H1 (cell line): ENCODE measurements at regions of chr19 and their contacts with region 1.

Region 1: DNA sequence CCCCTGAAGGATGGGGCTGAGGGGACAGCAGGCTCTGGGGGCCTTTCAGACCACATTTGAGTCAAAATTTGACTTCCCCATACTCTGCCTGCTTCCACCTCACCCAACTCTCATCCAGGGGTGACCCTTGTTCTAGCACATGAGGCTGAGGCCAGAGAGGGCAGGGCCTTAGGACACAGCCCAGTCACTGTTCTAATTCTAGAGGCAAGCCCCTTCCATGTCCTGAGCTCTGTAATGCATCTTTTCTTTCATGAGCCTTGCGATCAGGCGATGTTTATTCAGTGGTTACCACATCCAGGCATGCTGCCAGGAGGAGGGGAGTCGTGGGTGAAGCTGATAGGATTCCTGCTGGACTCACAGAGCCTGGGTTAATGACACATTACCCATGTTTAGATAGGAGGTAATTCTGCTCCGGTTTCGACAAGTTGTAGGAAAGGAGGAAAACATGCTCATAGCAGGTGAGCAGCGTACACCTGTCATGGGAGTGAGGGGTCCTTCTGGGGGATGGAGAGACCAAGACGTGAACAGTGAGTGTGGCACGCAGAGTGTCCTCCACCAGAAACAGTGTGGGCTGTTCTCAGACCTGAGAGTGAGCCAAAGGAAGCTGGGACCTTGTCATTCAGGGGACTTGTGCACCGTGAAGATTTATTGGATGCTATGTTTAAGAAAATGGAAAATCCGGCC is 9.3 kb downstream of the RPS9 start:
- DNase-seq: no peak
- H3K4me3 ChIP-seq: no peak overlapping the region
- H3K27ac ChIP-seq: no peak overlapping the region
- H3K4me1 ChIP-seq: peaks cover 0 to 4% (median 4%) of the 10 kb centered on the region in 4 experiments; a peak in 5 of 7 replicates
- H3K27me3 ChIP-seq: no peaks in the 10 kb centered on the region
- CTCF ChIP-seq: no peak
- EP300 ChIP-seq: no peak
- POLR2A ChIP-seq: no peak
- RAD21 ChIP-seq: no peak

Region 2: DNA sequence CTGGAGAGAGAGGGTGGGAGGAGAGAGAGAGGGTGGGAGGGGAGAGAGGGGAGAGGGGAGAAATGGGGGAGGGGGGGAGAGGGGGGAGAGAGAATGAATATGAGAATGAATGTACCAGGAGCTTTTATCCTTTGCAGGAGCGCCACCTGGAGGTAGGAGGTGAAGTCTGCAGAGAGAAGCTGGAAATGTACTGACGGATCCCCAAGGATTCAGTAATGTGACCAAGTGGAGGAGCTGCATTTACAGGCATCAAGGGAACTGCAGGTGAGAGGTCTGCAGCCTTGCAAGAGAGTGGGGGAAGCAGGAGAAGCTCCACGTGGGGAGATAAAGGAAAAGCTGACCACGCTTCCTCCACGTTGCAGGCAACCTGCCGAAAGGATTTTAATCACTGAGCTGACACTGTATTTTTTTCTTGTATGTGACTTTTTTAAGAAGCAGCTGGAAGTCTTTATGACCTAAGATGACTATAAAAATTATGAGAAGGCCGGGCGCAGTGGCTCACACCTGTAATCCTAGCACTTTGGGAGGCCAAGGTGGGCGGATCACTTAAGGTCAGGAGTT is 179.9 kb before region 1 on chr19:
- CTCF ChIA-PET with region 1: no interaction called
- POLR2A ChIA-PET with region 1: no interaction called
- DNase-seq: peak; percentile 50 to 86
- H3K4me3 ChIP-seq: no peak overlapping the region
- H3K27ac ChIP-seq: no peak overlapping the region
- H3K4me1 ChIP-seq: peaks cover 2 to 8% (median 4%) of the 10 kb centered on the region in 4 experiments; a peak in 6 of 7 replicates
- H3K27me3 ChIP-seq: no peaks in the 10 kb centered on the region
- CTCF ChIP-seq: peak; percentile 43 to 79 (median 75)
- EP300 ChIP-seq: no peak
- POLR2A ChIP-seq: no peak
- RAD21 ChIP-seq: peak; percentile 82 to 85

Region 3: DNA sequence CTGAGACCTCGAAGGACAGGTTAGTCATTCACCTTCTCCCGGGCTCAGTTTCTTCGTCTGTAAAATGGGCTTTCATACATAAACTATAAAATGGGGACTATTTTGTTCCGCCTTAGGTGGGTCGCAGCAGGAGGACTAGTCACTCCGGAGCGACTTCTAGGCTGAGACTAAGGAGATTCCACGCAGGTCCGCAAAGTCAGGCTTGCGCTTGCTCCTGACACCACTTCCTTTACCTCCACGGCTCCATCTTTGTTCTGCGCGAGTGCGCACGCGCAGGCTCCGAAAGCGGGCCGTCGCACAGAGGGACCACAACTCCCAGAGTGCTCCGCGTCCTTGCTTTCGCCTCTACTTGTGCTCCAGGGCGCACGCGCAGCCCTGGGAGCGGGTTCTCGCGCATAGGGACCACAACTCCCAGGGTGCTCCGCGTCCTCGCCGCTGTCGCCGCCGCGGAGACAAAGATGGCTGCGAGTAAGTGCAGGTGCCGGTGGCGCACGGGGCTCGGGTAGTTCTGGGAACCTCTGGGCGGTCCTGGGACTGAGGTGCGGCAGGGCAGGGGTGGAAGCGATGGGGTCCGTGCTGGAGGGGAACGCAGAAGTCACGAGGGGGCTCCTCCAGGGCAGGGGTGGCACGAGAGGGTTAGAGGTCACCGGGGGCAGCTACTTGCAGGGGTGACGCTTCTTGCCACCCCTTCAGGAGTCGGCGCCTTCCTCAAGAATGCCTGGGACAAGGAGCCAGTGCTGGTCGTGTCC is 107.4 kb before region 1 on chr19 and contains the start of gene NDUFA3:
- CTCF ChIA-PET with region 1: no interaction called
- POLR2A ChIA-PET with region 1: no interaction called
- DNase-seq: peak; percentile 95 to 96
- H3K4me3 ChIP-seq: peak within 1 kb of the TSS; percentile 78 to 96 (median 90)
- H3K27ac ChIP-seq: peak within 1 kb of the TSS; percentile 82; the same call in 1 of the 2 replicates
- H3K4me1 ChIP-seq: 0 out of 7 replicates have a peak, but pooled peaks cover 0 to 2% (median 0%) of the 10 kb centered on the region in 4 experiments
- H3K27me3 ChIP-seq: no peaks in the 10 kb centered on the region
- CTCF ChIP-seq: no peak
- EP300 ChIP-seq: no peak
- POLR2A ChIP-seq: peak in 1 of 2 experiments; percentile 85; a peak in 2 of 3 replicates
- RAD21 ChIP-seq: no peak
- total RNA-seq, gene NDUFA3: 175 and 177 TPM in 2 replicates

Region 4: GRCh38 chr19:54168174-54168917 is 41.6 kb before region 1 on chr19:
- CTCF ChIA-PET with region 1: interaction called, 5 read pairs
- POLR2A ChIA-PET with region 1: interaction called, 19 read pairs
- DNase-seq: peak in 1 of 2 experiments; percentile 100
- H3K4me3 ChIP-seq: peak overlapping the region in 2 of 4 experiments; percentile 5 to 34; a peak in 2 of 8 replicates
- H3K27ac ChIP-seq: no peak overlapping the region
- H3K4me1 ChIP-seq: peaks cover 0 to 10% (median 6%) of the 10 kb centered on the region in 4 experiments; a peak in 6 of 7 replicates
- H3K27me3 ChIP-seq: peaks cover 0 to 7% (median 4%) of the 10 kb centered on the region in 4 experiments; a peak in 4 of 7 replicates
- CTCF ChIP-seq: peak; percentile 81 to 92 (median 91)
- EP300 ChIP-seq: no peak
- POLR2A ChIP-seq: no peak
- RAD21 ChIP-seq: peak; percentile 57

Region 5: DNA sequence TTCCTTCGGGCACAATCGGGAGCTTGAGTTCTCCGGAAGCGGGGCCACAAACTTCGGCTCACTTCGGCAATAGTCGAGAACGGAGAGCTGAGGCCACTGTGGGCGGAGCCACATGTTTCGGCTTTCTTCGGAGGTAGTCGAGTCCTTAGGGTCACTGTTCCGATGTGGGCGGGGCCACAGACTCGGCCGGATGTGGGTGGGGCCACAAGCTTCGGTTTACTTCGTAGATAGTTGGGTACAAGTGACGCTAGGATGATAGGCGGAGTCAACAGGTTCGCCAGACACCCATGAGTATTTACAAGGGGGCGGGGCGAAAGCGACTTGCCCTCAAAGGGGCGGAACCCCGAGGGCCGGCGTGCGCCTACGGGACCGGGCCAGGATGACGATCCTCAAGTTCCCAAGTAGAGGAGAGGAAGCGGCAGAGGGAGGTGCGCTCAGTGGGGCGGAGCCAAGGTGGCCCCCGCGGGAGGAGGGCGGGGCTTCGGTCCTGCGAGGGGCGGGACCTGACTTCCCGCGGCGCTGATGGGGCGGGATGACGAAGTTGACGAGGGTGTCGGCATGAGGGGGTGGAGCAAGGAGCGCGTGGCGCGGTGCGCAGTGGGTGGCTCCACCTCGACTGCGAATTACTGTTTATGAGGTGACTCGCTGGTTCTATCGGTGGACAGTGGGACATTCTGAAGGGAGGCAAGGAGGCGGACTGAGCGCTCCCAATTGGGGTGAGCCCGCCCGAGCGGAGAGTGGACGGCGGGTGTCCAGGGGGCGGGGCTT is 20.0 kb before region 1 on chr19:
- CTCF ChIA-PET with region 1: no interaction called
- POLR2A ChIA-PET with region 1: interaction called, 909 read pairs
- DNase-seq: peak; percentile 100
- H3K4me3 ChIP-seq: peak overlapping the region; percentile 67 to 96 (median 83)
- H3K27ac ChIP-seq: peak overlapping the region; percentile 99
- H3K4me1 ChIP-seq: peaks cover 3 to 12% (median 7%) of the 10 kb centered on the region in 4 experiments; a peak in 5 of 7 replicates
- H3K27me3 ChIP-seq: no peaks in the 10 kb centered on the region
- CTCF ChIP-seq: no peak
- EP300 ChIP-seq: no peak
- POLR2A ChIP-seq: peak; percentile 73 to 79; a peak in 2 of 3 replicates
- RAD21 ChIP-seq: no peak

Region 6: GRCh38 chr19:54231077-54231931 is 21.4 kb after region 1 on chr19:
- CTCF ChIA-PET with region 1: interaction called, 6 read pairs
- POLR2A ChIA-PET with region 1: interaction called, 73 read pairs
- DNase-seq: peak; percentile 56 to 99
- H3K4me3 ChIP-seq: no peak overlapping the region; a peak in 2 of 8 replicates
- H3K27ac ChIP-seq: no peak overlapping the region
- H3K4me1 ChIP-seq: no peaks in the 10 kb centered on the region
- H3K27me3 ChIP-seq: peaks cover 0 to 7% (median 2%) of the 10 kb centered on the region in 4 experiments; a peak in 3 of 7 replicates
- CTCF ChIP-seq: peak; percentile 98
- EP300 ChIP-seq: no peak
- POLR2A ChIP-seq: no peak
- RAD21 ChIP-seq: peak; percentile 80 to 87

Region 7: GRCh38 chr19:54257116-54257480 is 47.1 kb after region 1 on chr19 and contains the start of gene LILRB5:
- CTCF ChIA-PET with region 1: interaction called, 4 read pairs
- POLR2A ChIA-PET with region 1: interaction called, 11 read pairs
- DNase-seq: peak in 1 of 2 experiments; percentile 38
- H3K4me3 ChIP-seq: no peak within 1 kb of the TSS
- H3K27ac ChIP-seq: no peak within 1 kb of the TSS
- H3K4me1 ChIP-seq: peaks cover 0 to 13% (median 1%) of the 10 kb centered on the region in 4 experiments; a peak in 4 of 7 replicates
- H3K27me3 ChIP-seq: no peaks in the 10 kb centered on the region; a peak in 2 of 7 replicates
- CTCF ChIP-seq: no peak
- EP300 ChIP-seq: no peak
- POLR2A ChIP-seq: no peak
- RAD21 ChIP-seq: no peak
- total RNA-seq, gene LILRB5: not detected in 2 replicates